HCT116 (cell line): ENCODE measurements at regions of chr2 and their contacts with region 1.

Region 1: DNA sequence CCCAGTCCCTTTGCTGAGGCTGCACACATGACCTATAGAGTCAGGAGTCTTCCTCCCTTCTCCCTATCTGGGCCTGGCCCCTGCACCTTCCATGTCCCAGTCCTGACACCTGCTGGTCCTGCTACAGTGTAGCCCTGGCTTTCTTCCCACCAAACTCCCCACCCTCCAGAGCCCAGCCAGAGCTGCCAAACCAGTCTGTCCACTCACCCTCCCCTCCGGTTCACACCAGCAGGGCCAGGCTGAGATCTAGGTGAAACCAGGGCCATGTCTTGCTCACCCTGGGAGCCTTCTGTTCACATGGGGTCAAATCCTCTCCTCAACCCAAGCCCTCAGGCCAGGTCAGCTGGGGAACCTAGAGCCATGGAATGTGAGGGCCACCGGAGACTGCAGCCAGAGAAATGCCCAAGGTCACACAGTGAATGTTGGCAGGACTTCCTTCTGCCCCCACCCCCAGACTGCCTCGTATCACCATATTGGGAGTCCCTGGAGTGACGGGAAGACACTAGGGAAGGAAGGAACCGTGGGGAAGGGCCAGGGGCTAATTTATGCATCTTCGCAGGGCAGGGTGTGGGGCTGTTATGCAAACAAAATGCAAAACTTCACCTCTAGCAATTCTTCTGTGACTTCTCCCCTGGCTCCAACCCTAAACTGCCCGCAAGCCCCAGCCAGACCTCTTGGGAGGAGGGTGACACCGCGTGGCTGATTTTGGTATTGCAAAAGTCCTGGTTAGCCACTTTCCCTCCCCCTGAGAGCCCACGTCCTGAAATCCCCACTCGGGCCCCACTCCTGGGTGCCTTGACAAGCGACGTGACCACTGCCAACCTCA is 14.6 kb downstream of the TNS1 start:
- DNase-seq: peak; percentile 78
- ATAC-seq: peak; percentile 91
- H3K4me3 ChIP-seq: peak overlapping the region; percentile 6 to 46
- H3K27ac ChIP-seq: peak overlapping the region; percentile 21; the same call in 1 of the 2 replicates
- H3K4me1 ChIP-seq: peaks cover 10 to 17% of the 10 kb centered on the region in 2 experiments
- H3K27me3 ChIP-seq: no peaks in the 10 kb centered on the region
- CTCF ChIP-seq: peak; percentile 79 to 85 (median 84)
- POLR2A ChIP-seq: no peak
- RAD21 ChIP-seq: peak; percentile 89

Region 2: DNA sequence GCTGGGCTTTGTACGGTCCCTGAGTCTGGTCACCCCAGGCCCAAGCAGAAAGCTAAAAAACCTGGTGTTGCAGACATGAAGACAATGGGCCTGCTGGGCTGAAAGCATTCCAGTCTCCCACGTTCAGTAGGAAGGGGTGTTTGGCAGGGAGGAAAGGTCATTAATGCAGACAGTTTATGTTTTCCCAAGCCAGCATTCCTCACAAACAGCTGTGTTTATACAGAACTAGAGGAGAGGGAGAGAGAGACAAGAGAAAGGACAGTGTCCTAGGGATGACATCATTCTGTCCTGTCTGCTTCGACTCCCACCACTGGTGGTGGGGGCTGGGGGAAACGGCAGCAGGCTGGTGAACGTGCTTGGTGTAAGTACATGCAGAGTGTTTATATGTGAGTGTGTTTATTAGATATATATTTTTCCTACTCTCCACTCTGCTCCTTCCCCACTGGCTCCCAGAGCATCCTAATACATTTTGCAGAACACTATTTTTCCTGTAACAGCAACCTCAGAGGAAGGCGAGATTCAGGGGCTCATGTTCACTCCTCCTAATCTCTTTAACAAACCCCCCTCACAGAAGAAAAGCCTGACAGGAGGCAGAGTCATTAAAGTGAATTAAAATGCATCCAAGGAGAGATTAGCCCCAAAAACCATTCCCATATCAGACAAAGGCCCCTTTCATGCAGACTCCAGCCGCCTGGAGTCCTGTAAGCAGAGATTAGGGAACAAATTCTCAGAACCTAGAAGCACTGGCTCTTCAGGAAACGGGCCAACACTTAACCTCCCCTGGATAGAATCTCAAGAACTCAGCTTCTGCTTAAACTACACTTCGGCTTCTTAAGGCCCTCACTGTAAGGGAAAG is 365.8 kb before region 1 on chr2:
- CTCF ChIA-PET with region 1: no interaction called
- POLR2A ChIA-PET with region 1: no interaction called
- RAD21 ChIA-PET with region 1: no interaction called
- intact Hi-C with region 1: no loop called
- DNase-seq: no peak
- ATAC-seq: no peak
- H3K4me3 ChIP-seq: no peak overlapping the region
- H3K27ac ChIP-seq: no peak overlapping the region
- H3K4me1 ChIP-seq: no peaks in the 10 kb centered on the region
- H3K27me3 ChIP-seq: peaks cover 39% of the 10 kb centered on the region
- CTCF ChIP-seq: no peak
- POLR2A ChIP-seq: no peak
- RAD21 ChIP-seq: no peak

Region 3: DNA sequence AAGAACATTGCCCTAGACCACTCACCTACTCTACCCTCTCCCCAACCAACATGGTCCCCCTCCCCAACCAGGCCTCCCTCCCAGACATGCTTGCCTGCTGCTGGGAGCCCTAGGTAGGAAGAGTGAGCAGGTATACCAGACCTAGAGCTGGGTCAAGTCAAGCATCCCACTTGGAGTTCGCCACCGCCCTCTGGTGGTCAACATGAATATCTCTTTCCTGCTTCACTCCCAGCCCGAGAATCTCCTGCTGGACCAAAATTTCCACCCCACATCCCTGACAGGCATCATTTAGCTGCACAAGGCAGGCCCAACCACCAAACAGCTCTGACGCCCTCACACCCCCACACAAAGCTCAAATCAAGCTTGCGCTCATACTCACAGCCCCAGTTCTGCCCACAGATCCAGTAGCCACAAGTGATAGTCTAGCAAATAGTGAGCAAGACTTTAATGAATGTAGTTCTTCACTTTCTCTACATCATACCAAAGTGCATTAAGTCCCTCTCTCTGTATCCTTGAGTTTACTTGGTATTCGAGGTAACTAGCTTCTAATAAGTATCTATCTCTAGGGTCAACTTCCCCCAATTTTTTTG is 101.4 kb before region 1 on chr2:
- CTCF ChIA-PET with region 1: interaction called, 6 read pairs
- POLR2A ChIA-PET with region 1: no interaction called
- RAD21 ChIA-PET with region 1: interaction called in 1 of 2 experiments, 4 read pairs
- intact Hi-C with region 1: loop called (anchors 1 kb)
- DNase-seq: peak; percentile 48
- ATAC-seq: peak; percentile 95
- H3K4me3 ChIP-seq: no peak overlapping the region
- H3K27ac ChIP-seq: no peak overlapping the region
- H3K4me1 ChIP-seq: no peaks in the 10 kb centered on the region
- H3K27me3 ChIP-seq: no peaks in the 10 kb centered on the region
- CTCF ChIP-seq: peak; percentile 69 to 89 (median 81)
- POLR2A ChIP-seq: no peak
- RAD21 ChIP-seq: peak; percentile 95

Region 4: GRCh38 chr2:217934321-217935131 is 53.7 kb before region 1 on chr2:
- CTCF ChIA-PET with region 1: interaction called, 8 read pairs
- POLR2A ChIA-PET with region 1: no interaction called
- RAD21 ChIA-PET with region 1: no interaction called
- intact Hi-C with region 1: loop called (anchors 5 kb)
- DNase-seq: no peak
- ATAC-seq: peak; percentile 32; the same call in 1 of the 2 replicates
- H3K4me3 ChIP-seq: no peak overlapping the region
- H3K27ac ChIP-seq: no peak overlapping the region
- H3K4me1 ChIP-seq: no peaks in the 10 kb centered on the region
- H3K27me3 ChIP-seq: no peaks in the 10 kb centered on the region
- CTCF ChIP-seq: no peak
- POLR2A ChIP-seq: no peak
- RAD21 ChIP-seq: no peak

Region 5: DNA sequence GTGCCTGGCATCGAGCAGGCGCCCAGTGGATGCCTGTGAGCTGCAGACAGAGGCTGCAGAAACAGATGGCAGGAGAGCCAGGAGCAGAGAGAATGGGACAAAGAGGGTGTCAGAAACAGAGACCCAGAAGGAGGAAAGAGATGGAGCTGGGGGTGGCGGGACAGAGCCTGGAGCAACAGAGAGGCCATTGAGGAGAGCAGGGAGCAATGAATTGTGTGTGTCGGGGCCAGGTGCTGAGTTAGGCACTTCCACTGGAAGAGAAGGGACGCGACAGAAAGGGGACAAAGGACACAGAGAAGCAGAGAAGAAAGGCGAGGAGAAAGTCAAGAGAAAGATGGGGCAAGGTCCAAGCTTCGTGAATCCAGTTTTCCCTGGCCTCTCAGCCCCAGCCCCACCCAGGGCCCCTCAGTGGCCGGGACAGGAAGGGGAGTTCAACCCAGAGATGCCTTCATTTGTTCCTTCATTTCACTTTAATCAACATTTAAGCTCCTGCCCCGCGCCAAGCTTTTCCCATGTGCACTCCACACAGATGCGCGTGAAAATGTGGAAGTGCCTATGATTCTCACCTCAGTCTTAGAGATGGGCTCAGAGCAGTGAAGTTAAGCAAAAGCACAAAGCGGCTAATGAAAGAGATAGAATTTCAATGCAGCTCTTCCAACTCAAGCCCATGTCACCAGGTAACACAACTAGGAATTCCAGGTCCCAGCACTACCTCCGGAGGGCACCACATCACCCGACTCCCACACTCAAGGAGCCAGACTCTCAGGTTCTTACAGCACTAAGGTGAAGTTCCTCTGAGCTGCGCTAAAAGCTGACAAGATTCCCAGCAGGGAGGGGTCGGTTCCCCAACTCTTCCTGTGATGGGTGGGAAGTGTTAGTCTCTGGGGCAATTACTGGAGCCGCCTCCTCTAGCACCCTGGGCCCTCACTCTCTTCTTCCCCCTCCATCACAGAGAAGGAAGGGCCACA is 40.6 kb before region 1 on chr2:
- CTCF ChIA-PET with region 1: interaction called, 3 read pairs
- POLR2A ChIA-PET with region 1: no interaction called
- RAD21 ChIA-PET with region 1: interaction called in 1 of 2 experiments, 3 read pairs
- intact Hi-C with region 1: loop called (anchors 1 kb)
- DNase-seq: peak; percentile 8
- ATAC-seq: peak; percentile 61
- H3K4me3 ChIP-seq: no peak overlapping the region
- H3K27ac ChIP-seq: no peak overlapping the region
- H3K4me1 ChIP-seq: peaks cover 9 to 10% of the 10 kb centered on the region in 2 experiments; a peak in 3 of 4 replicates
- H3K27me3 ChIP-seq: no peaks in the 10 kb centered on the region
- CTCF ChIP-seq: peak; percentile 42 to 47 (median 44); a peak in 5 of 6 replicates
- POLR2A ChIP-seq: no peak
- RAD21 ChIP-seq: peak; percentile 51